ENCODE measurements at regions of chr5 and their contacts with region 1.

Region 1: DNA sequence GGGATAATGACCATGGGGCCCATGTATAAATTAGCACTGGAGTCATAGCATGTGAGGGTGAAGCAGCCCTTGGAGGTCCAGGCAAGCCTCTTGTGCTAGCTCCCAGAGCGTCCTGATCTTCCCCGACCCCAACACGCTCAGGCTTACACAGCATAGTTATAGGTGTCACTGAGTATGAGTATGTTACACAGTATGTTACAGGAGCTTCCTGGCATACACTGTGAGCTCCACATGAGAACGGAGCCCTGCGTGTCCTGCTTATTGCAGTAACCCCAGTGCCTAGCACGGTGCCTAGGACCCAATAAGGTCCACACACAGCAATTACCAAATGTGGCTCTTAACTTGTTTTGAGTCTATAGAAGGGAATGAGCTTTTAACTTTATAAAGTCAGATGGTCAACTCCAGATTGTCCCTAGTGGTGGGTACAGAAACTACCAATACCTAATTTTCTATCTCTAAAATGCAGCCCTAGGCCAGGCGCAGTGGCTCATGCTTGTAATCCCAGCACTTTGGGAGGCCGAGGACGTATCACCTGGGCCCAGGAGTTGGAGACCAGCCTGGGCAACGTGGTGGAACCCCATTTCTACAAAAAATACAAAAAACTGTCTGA is 64.1 kb downstream of the PLAC8L1 start:
- DNase-seq: no peak
- H3K4me3 ChIP-seq: no peak overlapping the region
- H3K27ac ChIP-seq: no peak overlapping the region
- H3K4me1 ChIP-seq: peaks cover 35% of the 10 kb centered on the region
- H3K27me3 ChIP-seq: no peaks in the 10 kb centered on the region
- CTCF ChIP-seq: peak; percentile 41 to 49

Region 2: GRCh38 chr5:145925353-145925752 is 115.9 kb before region 1 on chr5:
- CTCF ChIA-PET with region 1: no interaction called
- dilution Hi-C with region 1: no loop called
- in situ Hi-C with region 1: no loop called
- intact Hi-C with region 1: loop called (anchors 5 kb)
- DNase-seq: peak; percentile 74
- H3K4me3 ChIP-seq: no peak overlapping the region
- H3K27ac ChIP-seq: peak overlapping the region; percentile 96
- H3K4me1 ChIP-seq: peaks cover 51% of the 10 kb centered on the region
- H3K27me3 ChIP-seq: no peaks in the 10 kb centered on the region
- CTCF ChIP-seq: no peak

Region 3: DNA sequence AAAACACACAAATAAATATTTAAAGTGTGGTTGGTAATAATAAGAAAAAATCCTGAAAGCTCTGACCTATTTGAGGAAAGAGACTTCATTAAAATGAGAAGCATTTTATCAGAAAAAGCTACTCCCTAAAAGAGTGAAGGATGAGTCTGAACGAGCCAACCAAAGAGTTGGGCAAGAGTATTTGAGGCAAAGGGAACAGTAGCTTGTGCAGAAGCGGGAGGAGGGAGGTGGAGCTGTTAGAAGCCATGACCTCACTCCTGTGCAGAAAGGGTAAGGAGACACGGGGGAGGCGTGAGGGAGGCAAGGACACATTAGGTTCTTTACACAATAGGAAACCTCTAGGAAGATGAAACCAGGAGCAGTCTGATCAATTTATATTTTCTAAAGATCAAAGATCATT is 75.5 kb before region 1 on chr5:
- CTCF ChIA-PET with region 1: no interaction called
- dilution Hi-C with region 1: no loop called
- in situ Hi-C with region 1: no loop called
- intact Hi-C with region 1: no loop called
- DNase-seq: no peak
- H3K4me3 ChIP-seq: no peak overlapping the region
- H3K27ac ChIP-seq: no peak overlapping the region
- H3K4me1 ChIP-seq: peaks cover 25% of the 10 kb centered on the region
- H3K27me3 ChIP-seq: no peaks in the 10 kb centered on the region
- CTCF ChIP-seq: no peak

Region 4: GRCh38 chr5:146165460-146165859 is 124.2 kb after region 1 on chr5:
- CTCF ChIA-PET with region 1: no interaction called
- dilution Hi-C with region 1: no loop called
- in situ Hi-C with region 1: no loop called
- intact Hi-C with region 1: no loop called
- DNase-seq: no peak
- H3K4me3 ChIP-seq: no peak overlapping the region
- H3K27ac ChIP-seq: no peak overlapping the region
- H3K4me1 ChIP-seq: no peaks in the 10 kb centered on the region
- H3K27me3 ChIP-seq: no peaks in the 10 kb centered on the region
- CTCF ChIP-seq: no peak